ENCODE measurements at regions of chr10 and their contacts with region 1.

Region 1: DNA sequence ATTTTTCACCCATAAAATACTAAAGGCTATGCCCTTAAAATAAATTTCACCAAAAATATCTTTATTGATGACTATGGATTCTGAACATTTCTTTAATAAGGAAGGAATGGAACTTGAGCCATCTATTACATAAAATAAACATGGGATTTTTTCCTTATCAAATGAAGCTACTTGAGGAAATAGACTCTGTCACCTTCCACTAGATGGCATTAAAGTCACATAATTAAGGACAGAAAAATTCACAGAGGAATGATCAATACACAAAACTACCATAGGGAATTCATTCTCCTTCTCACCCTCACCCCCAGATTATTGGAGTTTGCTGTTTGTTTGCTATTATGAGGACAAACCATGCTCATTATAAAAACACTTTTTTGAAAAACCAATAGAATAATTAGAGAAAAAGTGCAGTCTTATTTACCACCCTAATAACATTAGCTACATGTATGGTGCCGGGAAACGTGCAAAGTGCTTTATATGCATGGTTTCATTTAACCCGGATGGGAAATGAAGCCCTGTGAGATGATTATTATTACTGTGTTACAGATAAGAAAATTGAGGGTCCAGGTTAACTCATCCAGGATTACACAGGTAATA is 21.1 kb upstream of the FOXI2 start:
- DNase-seq: peak; percentile 44
- H3K4me3 ChIP-seq: no peak overlapping the region
- H3K27ac ChIP-seq: no peak overlapping the region
- H3K4me1 ChIP-seq: no peaks in the 10 kb centered on the region
- CTCF ChIP-seq: peak; percentile 83

Region 2: GRCh38 chr10:127196230-127196954 is 519.5 kb before region 1 on chr10 and contains the start of gene INSYN2A:
- CTCF ChIA-PET with region 1: no interaction called
- POLR2A ChIA-PET with region 1: no interaction called
- intact Hi-C with region 1: no loop called
- DNase-seq: no peak
- H3K4me3 ChIP-seq: no peak within 1 kb of the TSS
- H3K27ac ChIP-seq: no peak within 1 kb of the TSS
- H3K4me1 ChIP-seq: no peaks in the 10 kb centered on the region
- CTCF ChIP-seq: no peak
- total RNA-seq, gene INSYN2A: not detected in 2 replicates

Region 3: GRCh38 chr10:127694580-127695193 is 21.2 kb before region 1 on chr10:
- CTCF ChIA-PET with region 1: no interaction called
- POLR2A ChIA-PET with region 1: no interaction called
- intact Hi-C with region 1: no loop called
- DNase-seq: peak; percentile 66
- H3K4me3 ChIP-seq: no peak overlapping the region
- H3K27ac ChIP-seq: no peak overlapping the region
- H3K4me1 ChIP-seq: no peaks in the 10 kb centered on the region
- CTCF ChIP-seq: peak; percentile 84

Region 4: DNA sequence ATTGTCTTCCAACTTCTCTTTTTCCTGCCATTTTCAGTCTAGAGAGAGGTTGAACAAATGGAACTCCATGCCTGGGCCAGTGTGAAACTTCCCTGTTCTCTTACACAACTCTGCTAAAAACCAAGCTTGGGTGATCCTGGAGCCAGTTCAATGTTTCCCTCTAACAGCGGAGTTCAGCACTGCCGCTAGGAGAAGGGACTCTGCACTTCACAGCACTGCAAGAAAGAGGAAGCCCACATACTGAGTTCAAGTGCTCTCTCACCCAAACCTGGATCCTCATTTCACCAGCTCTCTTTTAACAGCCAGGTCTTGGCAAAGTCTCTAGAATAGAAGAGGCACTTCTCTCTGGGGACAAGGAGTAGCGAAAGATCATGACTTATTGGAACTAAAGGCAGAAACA is 39.9 kb after region 1 on chr10:
- CTCF ChIA-PET with region 1: no interaction called
- POLR2A ChIA-PET with region 1: no interaction called
- intact Hi-C with region 1: no loop called
- DNase-seq: no peak
- H3K4me3 ChIP-seq: no peak overlapping the region
- H3K27ac ChIP-seq: no peak overlapping the region
- H3K4me1 ChIP-seq: no peaks in the 10 kb centered on the region
- CTCF ChIP-seq: no peak

Region 5: DNA sequence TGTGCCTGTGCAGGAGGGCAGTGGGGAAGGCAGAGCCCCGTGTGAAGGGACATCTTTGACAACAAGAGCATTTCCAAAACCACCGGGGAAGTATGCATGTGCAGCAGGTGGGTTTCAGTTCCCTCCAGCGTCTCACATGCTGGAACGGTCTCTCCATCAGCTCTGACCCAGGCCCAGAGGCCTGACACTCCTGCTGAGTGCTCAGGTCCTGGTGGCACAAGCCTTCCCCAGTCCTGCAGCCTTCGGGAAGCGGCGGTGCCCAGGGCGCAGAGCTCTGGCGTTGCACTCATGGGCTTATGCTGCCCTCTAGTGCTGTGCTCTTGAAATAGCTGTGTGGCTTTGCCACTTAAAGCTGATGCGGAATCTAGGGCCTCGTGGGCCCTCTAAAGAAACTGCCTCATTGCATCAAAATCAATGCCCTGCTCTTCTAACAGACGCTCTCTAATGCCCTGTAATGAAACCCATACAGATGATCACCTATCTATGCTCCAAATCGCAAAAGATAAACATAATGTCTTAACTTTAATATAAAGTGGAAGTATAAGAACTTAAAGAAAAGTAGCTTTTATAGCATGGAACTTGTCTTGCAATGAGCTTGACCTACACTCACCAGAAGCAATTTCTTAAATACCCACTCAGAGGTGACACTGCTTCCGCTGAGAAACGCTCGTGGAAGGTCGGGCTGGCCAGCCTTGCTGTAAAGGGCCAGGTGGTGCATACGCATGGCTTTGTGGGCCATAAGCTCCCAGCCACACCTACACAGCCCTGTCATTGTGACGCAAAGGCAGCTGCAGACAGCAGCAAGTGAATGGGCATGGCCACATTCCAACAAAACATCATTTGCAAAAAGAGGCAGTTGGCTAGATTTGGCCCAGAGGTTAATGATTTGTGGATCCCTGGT is 138.2 kb after region 1 on chr10:
- CTCF ChIA-PET with region 1: interaction called, 3 read pairs
- POLR2A ChIA-PET with region 1: no interaction called
- intact Hi-C with region 1: loop called (anchors 1 kb)
- DNase-seq: peak; percentile 88
- H3K4me3 ChIP-seq: peak overlapping the region; percentile 54
- H3K27ac ChIP-seq: peak overlapping the region; percentile 63
- H3K4me1 ChIP-seq: peaks cover 44% of the 10 kb centered on the region
- CTCF ChIP-seq: peak; percentile 82

Region 6: GRCh38 chr10:128011175-128011979 is 295.5 kb after region 1 on chr10:
- CTCF ChIA-PET with region 1: interaction called, 3 read pairs
- POLR2A ChIA-PET with region 1: interaction called, 3 read pairs
- intact Hi-C with region 1: loop called (anchors 1 kb)
- DNase-seq: peak; percentile 79
- H3K4me3 ChIP-seq: no peak overlapping the region
- H3K27ac ChIP-seq: no peak overlapping the region
- H3K4me1 ChIP-seq: peaks cover 12% of the 10 kb centered on the region
- CTCF ChIP-seq: peak; percentile 93

Region 7: GRCh38 chr10:128069351-128070051 is 353.6 kb after region 1 on chr10:
- CTCF ChIA-PET with region 1: interaction called, 5 read pairs
- POLR2A ChIA-PET with region 1: no interaction called
- intact Hi-C with region 1: loop called (anchors 1 kb)
- DNase-seq: peak; percentile 84
- H3K4me3 ChIP-seq: no peak overlapping the region
- H3K27ac ChIP-seq: no peak overlapping the region
- H3K4me1 ChIP-seq: peaks cover 25% of the 10 kb centered on the region
- CTCF ChIP-seq: peak; percentile 87

Region 8: GRCh38 chr10:128150045-128150493 is 434.2 kb after region 1 on chr10:
- CTCF ChIA-PET with region 1: no interaction called
- POLR2A ChIA-PET with region 1: no interaction called
- intact Hi-C with region 1: loop called (anchors 10 kb)
- DNase-seq: peak; percentile 69
- H3K4me3 ChIP-seq: peak overlapping the region; percentile 41
- H3K27ac ChIP-seq: no peak overlapping the region
- H3K4me1 ChIP-seq: peaks cover 10% of the 10 kb centered on the region
- CTCF ChIP-seq: peak; percentile 78

Measured in OCI-LY7 (cell line).